Activated naive CD4-positive, alpha-beta T cell treated with anti-CD3 and anti-CD28 coated beads for 36 hours (primary cell): ENCODE measurements at regions of chr3 and their contacts with region 1.

Region 1: GRCh38 chr3:33047842-33048834 is 48.8 kb downstream of the GLB1 start:
- DNase-seq: peak; percentile 78
- H3K4me3 Mint-ChIP-seq: no peak overlapping the region
- H3K27ac Mint-ChIP-seq: peak overlapping the region; percentile 89
- H3K4me1 Mint-ChIP-seq: peaks cover 62% of the 10 kb centered on the region
- H3K27me3 Mint-ChIP-seq: no peaks in the 10 kb centered on the region

Region 2: GRCh38 chr3:33023172-33024136 is 24.7 kb before region 1 on chr3:
- CTCF ChIA-PET with region 1: interaction called, 11 read pairs
- intact Hi-C with region 1: loop called (anchors 1 kb)
- DNase-seq: no peak
- H3K4me3 Mint-ChIP-seq: peak overlapping the region; percentile 32
- H3K27ac Mint-ChIP-seq: peak overlapping the region; percentile 81
- H3K4me1 Mint-ChIP-seq: peaks cover 46% of the 10 kb centered on the region
- H3K27me3 Mint-ChIP-seq: no peaks in the 10 kb centered on the region

Region 3: DNA sequence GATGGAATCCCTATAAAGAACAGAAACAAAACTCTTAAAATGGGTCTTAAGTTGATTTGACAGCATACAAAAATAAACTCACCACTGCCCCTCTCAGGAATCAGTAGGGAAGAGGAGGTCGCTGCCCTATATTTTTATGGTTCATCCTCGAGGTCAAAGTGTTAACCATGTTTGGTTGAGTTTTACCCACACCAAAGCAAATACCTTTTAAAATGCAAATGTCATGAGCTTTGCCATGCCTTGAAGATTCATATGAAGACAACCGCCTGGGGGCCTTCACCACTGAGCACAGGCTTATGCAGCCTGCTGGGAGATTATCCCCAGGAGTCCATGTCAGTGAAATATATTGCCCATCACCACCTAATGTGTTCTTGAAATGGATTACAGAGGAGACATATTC is 17.3 kb before region 1 on chr3:
- CTCF ChIA-PET with region 1: interaction called, 6 read pairs
- intact Hi-C with region 1: loop called (anchors 2 kb)
- DNase-seq: peak; percentile 56
- H3K4me3 Mint-ChIP-seq: no peak overlapping the region
- H3K27ac Mint-ChIP-seq: no peak overlapping the region
- H3K4me1 Mint-ChIP-seq: peaks cover 15% of the 10 kb centered on the region
- H3K27me3 Mint-ChIP-seq: no peaks in the 10 kb centered on the region

Region 4: DNA sequence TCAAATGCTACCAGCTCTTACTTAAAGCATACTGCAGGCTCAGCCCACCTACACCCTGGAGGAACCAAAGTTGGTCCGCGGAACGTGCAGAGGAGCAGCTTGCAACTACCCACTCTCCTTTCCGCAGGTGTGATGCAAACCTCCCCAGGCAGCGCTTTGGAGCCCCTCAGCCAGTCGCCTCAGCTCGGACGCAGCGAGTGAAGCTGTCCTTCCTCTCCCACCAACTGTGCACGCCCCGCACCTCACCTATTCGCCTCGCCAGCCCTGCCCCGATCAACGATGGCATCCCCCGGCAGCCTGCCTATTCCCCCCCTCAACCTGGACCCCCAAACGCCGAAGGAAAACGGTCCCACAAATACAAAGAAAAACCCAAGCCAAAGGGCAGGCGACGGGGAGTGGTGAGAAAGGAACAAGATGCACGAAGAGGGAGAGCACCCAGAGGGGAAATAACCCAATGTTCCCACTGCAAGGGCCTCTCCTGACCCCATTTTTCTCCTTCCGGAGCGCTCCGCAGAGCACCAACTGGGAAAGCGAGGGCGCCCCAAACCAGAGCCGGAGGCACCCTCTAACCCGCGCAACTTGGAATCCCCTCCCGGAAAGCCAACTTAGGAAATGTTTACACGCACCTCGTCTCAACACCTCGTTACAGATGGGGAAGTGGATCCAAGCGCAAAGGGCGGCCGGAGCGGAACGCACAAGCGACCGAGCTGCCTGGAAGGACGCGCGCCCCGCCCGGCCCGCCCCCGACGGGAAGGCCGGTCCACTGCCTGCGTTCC is 48.1 kb after region 1 on chr3:
- CTCF ChIA-PET with region 1: no interaction called
- intact Hi-C with region 1: loop called (anchors 2 kb)
- DNase-seq: peak; percentile 68
- H3K4me3 Mint-ChIP-seq: peak overlapping the region; percentile 98
- H3K27ac Mint-ChIP-seq: peak overlapping the region; percentile 88
- H3K4me1 Mint-ChIP-seq: peaks cover 41% of the 10 kb centered on the region
- H3K27me3 Mint-ChIP-seq: no peaks in the 10 kb centered on the region